Activated CD4-positive, alpha-beta T cell treated with anti-CD3 and anti-CD28 coated beads, Interleukin-2, amount 10 ng/mL, durations not matched to agents 7 days and 5 days (primary cell): ENCODE measurements at regions of chr20 and their contacts with region 1.

Region 1: DNA sequence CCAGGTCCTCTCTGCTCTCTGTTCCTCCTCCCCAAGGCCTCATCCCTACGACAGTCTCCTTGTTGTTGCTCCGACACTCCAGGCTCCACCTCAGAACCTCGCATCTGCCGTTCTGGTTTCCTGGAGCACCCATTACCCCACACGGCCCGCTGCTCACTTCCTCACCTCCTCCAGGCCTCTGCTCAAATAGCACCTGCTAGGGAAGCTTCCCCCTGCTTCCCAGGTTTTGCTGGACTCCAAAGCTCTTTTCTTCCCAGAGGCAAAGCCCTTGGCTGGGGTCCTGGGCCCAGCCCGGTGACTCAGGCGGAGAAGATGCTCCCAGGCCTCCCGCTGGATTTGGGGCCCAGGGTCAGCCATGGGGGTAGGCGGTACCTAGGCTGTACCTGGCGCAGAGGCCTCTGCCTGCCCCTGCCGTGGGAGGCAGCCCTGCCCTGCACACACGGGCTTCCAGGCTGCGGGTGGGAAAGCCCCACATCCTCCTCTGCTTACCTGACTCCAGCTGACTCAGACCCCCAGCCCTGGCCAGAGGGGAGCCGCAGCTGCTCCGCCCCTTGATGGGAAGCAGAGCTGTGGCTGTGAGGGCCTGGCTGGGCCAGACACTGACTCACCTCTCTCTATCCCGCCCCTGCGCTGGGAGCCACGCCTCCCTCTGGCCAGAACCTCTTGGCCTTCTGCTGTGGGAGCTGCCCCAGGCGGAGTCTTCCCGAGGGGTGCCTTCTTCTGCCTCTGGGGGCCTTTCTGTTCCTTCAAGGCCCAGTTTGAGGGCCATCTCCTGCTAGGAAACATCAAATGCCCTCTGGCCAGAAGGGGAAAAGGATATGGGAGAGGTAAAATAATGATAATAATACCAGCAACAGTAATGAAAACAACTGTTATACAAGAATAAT is 130.5 kb downstream of the CEBPB start:
- DNase-seq: no peak
- H3K4me3 Mint-ChIP-seq: no peak overlapping the region
- H3K27ac Mint-ChIP-seq: no peak overlapping the region
- H3K4me1 Mint-ChIP-seq: peaks cover 6% of the 10 kb centered on the region
- H3K27me3 Mint-ChIP-seq: peaks cover 5% of the 10 kb centered on the region

Region 2: GRCh38 chr20:50186151-50186998 is 134.8 kb before region 1 on chr20:
- CTCF ChIA-PET with region 1: no interaction called
- POLR2A ChIA-PET with region 1: no interaction called
- DNase-seq: peak; percentile 91
- H3K4me3 Mint-ChIP-seq: no peak overlapping the region
- H3K27ac Mint-ChIP-seq: peak overlapping the region; percentile 31
- H3K4me1 Mint-ChIP-seq: peaks cover 6% of the 10 kb centered on the region
- H3K27me3 Mint-ChIP-seq: peaks cover 23% of the 10 kb centered on the region

Region 3: GRCh38 chr20:50338479-50339391 is 17.6 kb after region 1 on chr20:
- CTCF ChIA-PET with region 1: interaction called, 11 read pairs
- POLR2A ChIA-PET with region 1: no interaction called
- DNase-seq: peak; percentile 69
- H3K4me3 Mint-ChIP-seq: peak overlapping the region; percentile 39
- H3K27ac Mint-ChIP-seq: peak overlapping the region; percentile 94
- H3K4me1 Mint-ChIP-seq: peaks cover 72% of the 10 kb centered on the region
- H3K27me3 Mint-ChIP-seq: peaks cover 3% of the 10 kb centered on the region